GM10248 (cell line): ENCODE measurements at regions of chr1 and their contacts with region 1.

Region 1: DNA sequence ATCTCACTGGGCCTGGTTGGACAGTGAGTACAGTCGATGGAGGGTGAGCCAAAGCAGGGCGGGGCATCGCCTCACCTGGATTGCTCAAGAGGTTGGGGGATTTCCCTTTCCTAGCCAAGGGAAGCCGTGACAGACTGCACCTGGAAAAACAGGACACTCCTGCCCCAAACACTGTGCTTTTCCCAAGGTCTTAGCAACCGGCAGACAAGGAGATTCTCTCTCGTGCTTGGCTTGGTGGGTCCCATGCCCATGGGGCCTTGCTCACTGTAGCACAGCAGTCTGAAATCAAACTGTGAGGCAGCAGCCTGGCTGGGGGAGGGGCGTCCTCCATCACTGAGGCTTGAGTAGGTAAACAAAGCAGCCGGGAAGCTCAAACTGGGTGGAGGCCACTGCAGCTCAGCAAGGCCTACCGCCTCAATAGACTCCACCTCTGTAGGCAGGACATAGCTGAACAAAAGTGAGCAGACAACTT is 11.3 kb downstream of the C1orf105 start:
- DNase-seq: no peak
- CTCF ChIP-seq: no peak

Region 2: GRCh38 chr1:172443626-172444453 is 12.1 kb after region 1 on chr1 and contains the start of gene PIGC:
- CTCF ChIA-PET with region 1: interaction called, 25 read pairs
- POLR2A ChIA-PET with region 1: no interaction called
- DNase-seq: peak; percentile 93
- CTCF ChIP-seq: peak; percentile 93